Esophagus muscularis mucosa (tissue), 4 donors: ENCODE measurements at regions of chr20 and their contacts with region 1.

Region 1: GRCh38 chr20:12788632-12789299 is 220.0 kb upstream of the SPTLC3 start:
- DNase-seq: no peak
- H3K4me3 ChIP-seq: no peak overlapping the region
- H3K27ac ChIP-seq: no peak overlapping the region
- H3K4me1 ChIP-seq: no peaks in the 10 kb centered on the region
- H3K27me3 ChIP-seq: no peaks in the 10 kb centered on the region
- CTCF ChIP-seq: no peak
- EP300 ChIP-seq: no peak
- POLR2A ChIP-seq: no peak

Region 2: DNA sequence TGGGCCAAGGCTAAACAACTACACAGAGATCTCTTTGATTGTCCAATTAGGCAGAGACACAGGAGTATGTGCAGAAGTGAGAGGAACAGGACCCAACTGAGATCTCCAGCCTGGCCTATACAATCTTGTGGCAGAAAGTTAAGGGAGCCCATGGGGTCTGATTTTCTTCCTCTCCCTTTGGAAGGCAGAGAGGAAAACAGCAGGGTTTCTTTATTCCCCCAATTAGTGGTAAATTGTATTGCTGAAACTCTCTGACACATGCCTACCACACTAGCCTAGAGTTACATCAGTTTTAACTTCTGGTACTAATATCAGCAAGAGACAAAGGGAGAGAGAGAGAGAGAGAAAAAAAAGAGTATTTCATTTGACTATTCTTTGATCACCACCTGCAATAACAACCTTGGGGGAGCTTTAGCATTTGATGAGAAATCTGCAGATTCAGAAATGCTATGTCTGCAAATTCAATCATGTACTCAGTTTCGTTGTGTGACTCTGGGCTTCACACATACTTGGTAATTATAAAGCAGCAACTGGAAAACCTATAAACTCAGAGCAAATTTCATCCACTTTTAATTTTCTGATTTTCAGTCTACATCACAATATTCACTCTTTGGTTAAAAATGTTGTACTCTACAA is 40.3 kb before region 1 on chr20:
- intact Hi-C with region 1: no loop called
- DNase-seq: no peak
- H3K4me3 ChIP-seq: no peak overlapping the region
- H3K27ac ChIP-seq: no peak overlapping the region
- H3K4me1 ChIP-seq: no peaks in the 10 kb centered on the region
- H3K27me3 ChIP-seq: no peaks in the 10 kb centered on the region
- CTCF ChIP-seq: no peak
- EP300 ChIP-seq: no peak
- POLR2A ChIP-seq: no peak

Region 3: GRCh38 chr20:12847872-12848271 is 59.1 kb after region 1 on chr20:
- intact Hi-C with region 1: loop called (anchors 10 kb)
- DNase-seq: no peak
- H3K4me3 ChIP-seq: no peak overlapping the region
- H3K27ac ChIP-seq: no peak overlapping the region
- H3K4me1 ChIP-seq: no peaks in the 10 kb centered on the region
- H3K27me3 ChIP-seq: no peaks in the 10 kb centered on the region
- CTCF ChIP-seq: no peak
- EP300 ChIP-seq: no peak
- POLR2A ChIP-seq: no peak